ENCODE measurements at regions of chr3 and their contacts with region 1.

Region 1: DNA sequence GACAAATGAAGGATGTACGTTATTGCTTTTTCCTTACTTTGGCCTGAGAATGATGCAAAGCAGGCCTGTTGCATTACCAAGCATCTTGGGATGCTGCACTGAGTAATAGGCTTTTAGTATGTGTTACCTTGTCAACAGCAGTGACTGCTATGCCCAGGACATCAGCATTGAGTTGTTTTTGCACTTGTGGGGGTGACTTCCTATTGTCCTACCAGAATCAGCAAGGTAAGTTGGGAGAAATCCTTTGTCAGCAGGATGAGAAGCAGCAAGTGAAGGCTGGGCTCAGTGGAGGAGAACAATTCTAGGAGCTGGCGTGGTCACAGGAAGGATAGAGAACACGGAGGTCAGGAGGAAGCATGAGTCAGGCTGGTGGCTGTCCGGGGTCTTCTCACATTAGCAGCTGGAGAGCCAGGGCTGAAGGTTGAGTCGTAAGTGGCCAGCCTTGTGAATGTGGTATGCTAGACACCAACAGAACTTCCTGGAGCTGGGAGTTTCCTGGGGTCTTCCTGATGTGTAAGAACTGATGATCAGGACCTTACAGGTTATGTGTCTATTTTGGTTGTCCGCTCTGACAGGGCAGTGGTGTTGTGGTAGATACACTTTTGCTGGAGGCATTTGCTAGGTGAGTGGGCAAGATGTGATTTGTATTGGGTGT is 142.7 kb downstream of the FNDC3B start:
- DNase-seq: no peak
- ATAC-seq: peak; percentile 50
- H3K4me3 ChIP-seq: no peak overlapping the region
- H3K27ac ChIP-seq: peak overlapping the region; percentile 9
- H3K4me1 ChIP-seq: peaks cover 41% of the 10 kb centered on the region
- H3K27me3 ChIP-seq: no peaks in the 10 kb centered on the region
- CTCF ChIP-seq: no peak
- EP300 ChIP-seq: no peak
- POLR2A ChIP-seq: no peak
- RAD21 ChIP-seq: no peak

Region 2: GRCh38 chr3:172145031-172145686 is 36.9 kb before region 1 on chr3:
- CTCF ChIA-PET with region 1: interaction called, 7 read pairs
- POLR2A ChIA-PET with region 1: interaction called, 17 read pairs
- RAD21 ChIA-PET with region 1: interaction called, 124 read pairs
- SMC1A ChIA-PET with region 1: interaction called, 441 read pairs
- in situ Hi-C with region 1: no loop called
- intact Hi-C with region 1: loop called (anchors 5 kb)
- DNase-seq: peak; percentile 60
- ATAC-seq: peak; percentile 57
- H3K4me3 ChIP-seq: no peak overlapping the region
- H3K27ac ChIP-seq: peak overlapping the region; percentile 48
- H3K4me1 ChIP-seq: peaks cover 66% of the 10 kb centered on the region
- H3K27me3 ChIP-seq: no peaks in the 10 kb centered on the region
- CTCF ChIP-seq: no peak
- EP300 ChIP-seq: peak in 1 of 2 experiments; percentile 8; a peak in 1 of 4 replicates
- POLR2A ChIP-seq: no peak
- RAD21 ChIP-seq: no peak; the same call in 1 of the 2 replicates

Region 3: DNA sequence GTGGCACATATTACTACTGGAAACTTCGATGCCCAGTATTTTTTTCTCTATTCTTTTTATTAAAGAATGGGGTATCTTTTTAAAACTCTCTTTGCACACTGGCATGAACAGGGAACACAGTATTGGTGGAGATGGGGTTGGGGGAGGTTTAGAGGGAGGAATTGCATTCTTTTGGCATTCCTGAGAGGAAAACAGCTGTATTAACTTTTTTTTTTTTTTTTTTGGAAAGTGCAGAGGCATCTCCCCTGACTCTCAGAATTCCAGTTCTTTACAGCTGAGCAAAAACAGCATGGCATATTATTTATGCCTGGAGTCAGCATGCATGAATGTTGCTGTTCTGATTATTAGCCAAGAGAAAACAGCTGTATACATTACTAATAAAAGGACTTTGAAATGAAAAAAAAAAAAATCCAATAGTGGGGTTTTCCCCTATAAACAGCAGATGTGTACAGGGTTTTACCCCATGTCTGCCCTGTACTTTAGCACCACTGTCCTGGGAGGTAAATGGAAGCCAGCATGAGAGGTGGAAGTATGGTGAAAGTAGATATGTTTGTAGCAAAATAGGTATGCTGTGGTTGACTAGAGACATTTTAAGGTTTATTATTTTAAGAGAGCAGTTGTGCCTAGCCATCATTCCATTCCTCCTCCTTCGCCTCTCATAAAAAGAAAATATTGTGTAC is 10.5 kb before region 1 on chr3:
- CTCF ChIA-PET with region 1: interaction called, 7 read pairs
- POLR2A ChIA-PET with region 1: interaction called, 3 read pairs
- RAD21 ChIA-PET with region 1: interaction called, 4 read pairs
- SMC1A ChIA-PET with region 1: interaction called, 28 read pairs
- in situ Hi-C with region 1: no loop called
- intact Hi-C with region 1: no loop called
- DNase-seq: no peak
- ATAC-seq: peak; percentile 71
- H3K4me3 ChIP-seq: no peak overlapping the region
- H3K27ac ChIP-seq: no peak overlapping the region
- H3K4me1 ChIP-seq: peaks cover 30% of the 10 kb centered on the region
- H3K27me3 ChIP-seq: no peaks in the 10 kb centered on the region
- CTCF ChIP-seq: no peak
- EP300 ChIP-seq: no peak
- POLR2A ChIP-seq: no peak
- RAD21 ChIP-seq: no peak

Region 4: DNA sequence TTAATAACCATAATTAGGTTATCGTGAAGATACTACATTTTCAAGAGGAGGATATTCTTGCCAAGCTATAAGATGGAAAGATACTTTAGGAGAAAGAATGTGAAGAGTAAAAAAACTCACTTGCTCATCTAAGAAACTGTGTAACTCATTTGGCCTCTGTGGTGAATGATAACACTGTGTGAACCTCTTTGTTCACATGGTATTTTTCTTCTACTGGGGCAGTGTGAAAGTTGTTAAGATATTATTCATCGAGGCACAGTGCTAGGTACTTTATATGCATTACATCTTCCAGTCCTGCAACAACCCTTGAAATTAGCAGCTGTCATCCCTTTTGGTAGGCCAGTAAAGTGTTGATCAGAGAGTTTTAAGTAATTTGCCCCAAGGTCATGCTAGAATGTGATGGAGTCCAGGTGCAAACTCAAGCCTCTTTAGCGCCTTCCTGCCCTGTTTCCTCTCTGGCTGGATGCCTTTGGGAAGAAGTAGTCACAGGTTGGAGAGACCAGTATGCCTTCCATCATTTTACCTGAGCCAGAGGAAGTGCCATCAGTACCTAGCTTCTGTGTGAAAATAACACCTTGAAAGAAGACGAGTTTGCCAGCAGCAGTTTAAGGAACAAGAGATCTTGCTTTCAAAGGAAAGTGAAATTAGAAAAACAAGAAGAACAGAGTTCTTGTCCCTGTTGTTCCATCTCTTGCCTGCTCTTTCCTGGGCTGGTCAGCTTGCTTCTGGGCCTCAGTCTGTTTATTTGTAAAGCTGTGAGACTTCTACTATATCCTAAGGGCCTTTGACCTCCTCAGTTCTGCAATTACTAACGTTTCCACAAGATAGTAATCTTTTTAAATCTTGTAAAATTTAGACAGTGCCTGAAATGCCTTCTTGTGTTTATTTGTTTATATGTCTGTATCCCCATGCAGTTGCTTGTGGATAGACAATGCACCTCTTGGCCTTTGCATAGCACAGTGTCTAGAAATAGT is 36.6 kb after region 1 on chr3:
- CTCF ChIA-PET with region 1: interaction called, 4 read pairs
- POLR2A ChIA-PET with region 1: interaction called, 6 read pairs
- RAD21 ChIA-PET with region 1: interaction called, 6 read pairs
- SMC1A ChIA-PET with region 1: interaction called, 16 read pairs
- in situ Hi-C with region 1: no loop called
- intact Hi-C with region 1: no loop called
- DNase-seq: peak; percentile 16
- ATAC-seq: peak; percentile 55
- H3K4me3 ChIP-seq: no peak overlapping the region
- H3K27ac ChIP-seq: peak overlapping the region; percentile 35
- H3K4me1 ChIP-seq: peaks cover 31% of the 10 kb centered on the region
- H3K27me3 ChIP-seq: no peaks in the 10 kb centered on the region
- CTCF ChIP-seq: no peak
- EP300 ChIP-seq: no peak
- POLR2A ChIP-seq: no peak
- RAD21 ChIP-seq: no peak